ENCODE measurements at regions of chr3 and their contacts with region 1.

Region 1: DNA sequence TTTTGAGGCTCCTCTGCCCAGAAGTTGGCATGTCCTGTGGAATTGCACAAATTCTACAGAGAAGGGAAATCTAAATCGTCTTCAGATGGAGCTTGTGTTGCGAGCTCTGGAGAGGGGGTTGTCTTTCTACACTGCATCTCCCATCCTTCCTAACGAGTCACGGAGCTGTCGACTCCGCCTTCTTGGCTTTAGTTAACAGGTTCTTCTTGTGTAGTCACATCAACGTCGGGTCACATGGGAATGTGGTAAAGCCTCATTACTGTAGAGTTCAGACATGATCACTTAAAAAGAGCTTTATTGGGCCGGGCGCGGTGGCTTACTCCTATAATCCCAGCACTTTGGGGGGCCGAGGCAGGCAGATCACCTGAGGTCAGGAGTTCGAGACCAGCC is 60.0 kb downstream of the DNASE1L3 start:
- DNase-seq: no peak
- H3K27ac ChIP-seq: peak overlapping the region; percentile 12; the same call in 1 of the 2 replicates
- CTCF ChIP-seq: no peak

Region 2: GRCh38 chr3:57892423-57892822 is 258.4 kb before region 1 on chr3:
- CTCF ChIA-PET with region 1: no interaction called
- POLR2A ChIA-PET with region 1: no interaction called
- DNase-seq: peak; percentile 3
- H3K27ac ChIP-seq: no peak overlapping the region
- CTCF ChIP-seq: no peak

Region 3: DNA sequence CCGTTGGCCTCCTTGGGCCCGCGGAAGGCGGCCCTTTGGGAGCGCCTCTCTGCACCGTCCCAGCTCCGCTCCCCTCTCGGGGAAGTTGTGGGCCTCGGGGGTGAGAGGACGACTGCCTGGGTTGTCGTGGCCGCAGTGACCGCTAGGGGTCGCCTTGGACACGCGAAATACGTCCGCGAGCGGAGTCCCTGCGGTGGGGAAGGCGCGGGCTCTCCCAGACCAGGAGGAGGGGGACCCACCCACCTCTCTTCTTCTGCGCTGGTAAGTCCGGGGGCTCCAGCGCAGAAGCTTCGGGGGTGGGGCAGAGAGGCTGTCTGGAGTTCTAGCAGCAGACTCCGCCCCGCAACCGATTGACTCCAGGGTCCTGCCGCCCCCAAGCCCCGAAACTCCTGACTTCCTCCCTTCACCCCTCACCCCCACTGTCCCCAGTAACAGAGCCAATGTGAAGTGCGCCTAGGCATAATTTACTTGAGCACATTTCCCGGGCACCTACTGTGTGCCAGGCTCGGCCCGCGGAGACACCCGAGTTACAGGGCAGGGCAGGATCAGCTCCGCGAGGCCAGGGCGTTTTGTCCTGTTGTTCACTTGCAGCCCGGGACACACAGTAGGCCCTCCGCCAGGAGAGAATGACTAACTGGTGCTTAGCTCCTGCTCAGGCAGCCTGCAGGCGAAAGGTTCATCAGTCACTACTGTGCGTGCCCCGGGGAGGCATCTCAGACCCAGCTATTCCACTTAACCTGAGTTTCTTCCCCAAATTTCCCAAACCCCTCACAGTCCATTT is 27.1 kb after region 1 on chr3:
- CTCF ChIA-PET with region 1: interaction called, 10 read pairs
- POLR2A ChIA-PET with region 1: no interaction called
- DNase-seq: peak; percentile 64
- H3K27ac ChIP-seq: peak overlapping the region; percentile 76
- CTCF ChIP-seq: peak; percentile 93

Measured in RWPE1 (cell line).